Activated CD4-positive, alpha-beta memory T cell treated with anti-CD3 and anti-CD28 coated beads for 36 hours (primary cell): ENCODE measurements at regions of chr6 and their contacts with region 1.

Region 1: GRCh38 chr6:111068510-111069205 is 18.6 kb upstream of the SLC16A10 start:
- DNase-seq: no peak
- H3K4me3 Mint-ChIP-seq: no peak overlapping the region
- H3K27ac Mint-ChIP-seq: no peak overlapping the region
- H3K4me1 Mint-ChIP-seq: no peaks in the 10 kb centered on the region
- H3K27me3 Mint-ChIP-seq: peaks cover 4% of the 10 kb centered on the region

Region 2: GRCh38 chr6:111057074-111057752 is 11.4 kb before region 1 on chr6:
- CTCF ChIA-PET with region 1: interaction called, 13 read pairs
- POLR2A ChIA-PET with region 1: no interaction called
- intact Hi-C with region 1: no loop called
- DNase-seq: no peak
- H3K4me3 Mint-ChIP-seq: no peak overlapping the region
- H3K27ac Mint-ChIP-seq: no peak overlapping the region
- H3K4me1 Mint-ChIP-seq: no peaks in the 10 kb centered on the region
- H3K27me3 Mint-ChIP-seq: peaks cover 2% of the 10 kb centered on the region